Mammary epithelial cell (primary cell): ENCODE measurements at regions of chr9 and their contacts with region 1.

Region 1: GRCh38 chr9:114405294-114406034 is 17.7 kb upstream of the AKNA start:
- DNase-seq: peak; percentile 71
- H3K4me3 ChIP-seq: no peak overlapping the region
- H3K27ac ChIP-seq: no peak overlapping the region
- H3K4me1 ChIP-seq: peaks cover 27% of the 10 kb centered on the region
- H3K27me3 ChIP-seq: no peaks in the 10 kb centered on the region
- CTCF ChIP-seq: peak; percentile 86 to 87

Region 2: DNA sequence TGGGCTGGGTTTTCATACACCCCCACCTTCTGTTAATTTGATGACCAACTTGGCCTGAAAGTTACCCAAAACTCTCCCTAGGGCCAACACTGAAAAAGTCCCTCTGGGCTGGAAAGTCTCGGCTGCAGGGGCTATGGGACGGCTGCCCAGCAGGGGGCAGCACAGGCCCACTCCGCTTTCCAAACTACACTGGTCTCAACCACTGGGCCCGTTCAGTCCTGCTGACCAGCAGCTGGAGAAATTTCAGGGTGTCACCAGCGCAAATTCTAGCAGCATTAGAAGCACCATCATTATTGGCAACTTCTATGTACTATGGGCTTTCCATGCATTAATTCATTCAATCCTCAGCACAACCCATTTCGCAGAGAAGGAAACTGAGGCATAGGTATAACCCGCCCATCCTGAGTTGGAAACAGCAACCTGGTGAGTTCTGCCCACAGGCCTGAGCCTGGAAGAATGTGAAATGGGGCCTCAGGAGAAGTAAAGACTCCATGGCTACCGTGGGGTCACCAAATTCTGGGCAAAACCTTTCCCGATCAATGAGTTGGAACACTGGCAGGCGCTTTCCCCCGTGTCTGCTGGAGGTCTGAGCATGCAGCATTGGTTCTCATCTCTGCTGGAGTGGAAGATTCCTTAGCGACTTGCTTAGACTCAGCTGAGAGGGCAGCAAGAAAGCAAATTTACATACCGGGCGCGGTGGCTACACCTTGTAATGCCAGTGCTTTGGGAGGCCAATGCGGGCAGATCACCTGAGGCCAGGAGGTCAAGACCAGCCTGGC is 66.1 kb before region 1 on chr9:
- CTCF ChIA-PET with region 1: interaction called, 12 read pairs
- dilution Hi-C with region 1: no loop called
- in situ Hi-C with region 1: no loop called
- intact Hi-C with region 1: loop called (anchors 1 kb)
- DNase-seq: peak; percentile 37
- H3K4me3 ChIP-seq: no peak overlapping the region
- H3K27ac ChIP-seq: no peak overlapping the region
- H3K4me1 ChIP-seq: peaks cover 11% of the 10 kb centered on the region
- H3K27me3 ChIP-seq: no peaks in the 10 kb centered on the region
- CTCF ChIP-seq: peak; percentile 85 to 87

Region 3: GRCh38 chr9:114424126-114424525 is 18.7 kb after region 1 on chr9:
- CTCF ChIA-PET with region 1: no interaction called
- dilution Hi-C with region 1: no loop called
- in situ Hi-C with region 1: no loop called
- intact Hi-C with region 1: no loop called
- DNase-seq: no peak
- H3K4me3 ChIP-seq: no peak overlapping the region
- H3K27ac ChIP-seq: no peak overlapping the region
- H3K4me1 ChIP-seq: no peaks in the 10 kb centered on the region
- H3K27me3 ChIP-seq: no peaks in the 10 kb centered on the region
- CTCF ChIP-seq: no peak

Region 4: GRCh38 chr9:114434878-114435311 is 29.4 kb after region 1 on chr9:
- CTCF ChIA-PET with region 1: no interaction called
- dilution Hi-C with region 1: no loop called
- in situ Hi-C with region 1: no loop called
- intact Hi-C with region 1: loop called (anchors 2 kb)
- DNase-seq: peak; percentile 41
- H3K4me3 ChIP-seq: no peak overlapping the region
- H3K27ac ChIP-seq: no peak overlapping the region
- H3K4me1 ChIP-seq: no peaks in the 10 kb centered on the region
- H3K27me3 ChIP-seq: no peaks in the 10 kb centered on the region
- CTCF ChIP-seq: peak; percentile 80 to 84

Region 5: DNA sequence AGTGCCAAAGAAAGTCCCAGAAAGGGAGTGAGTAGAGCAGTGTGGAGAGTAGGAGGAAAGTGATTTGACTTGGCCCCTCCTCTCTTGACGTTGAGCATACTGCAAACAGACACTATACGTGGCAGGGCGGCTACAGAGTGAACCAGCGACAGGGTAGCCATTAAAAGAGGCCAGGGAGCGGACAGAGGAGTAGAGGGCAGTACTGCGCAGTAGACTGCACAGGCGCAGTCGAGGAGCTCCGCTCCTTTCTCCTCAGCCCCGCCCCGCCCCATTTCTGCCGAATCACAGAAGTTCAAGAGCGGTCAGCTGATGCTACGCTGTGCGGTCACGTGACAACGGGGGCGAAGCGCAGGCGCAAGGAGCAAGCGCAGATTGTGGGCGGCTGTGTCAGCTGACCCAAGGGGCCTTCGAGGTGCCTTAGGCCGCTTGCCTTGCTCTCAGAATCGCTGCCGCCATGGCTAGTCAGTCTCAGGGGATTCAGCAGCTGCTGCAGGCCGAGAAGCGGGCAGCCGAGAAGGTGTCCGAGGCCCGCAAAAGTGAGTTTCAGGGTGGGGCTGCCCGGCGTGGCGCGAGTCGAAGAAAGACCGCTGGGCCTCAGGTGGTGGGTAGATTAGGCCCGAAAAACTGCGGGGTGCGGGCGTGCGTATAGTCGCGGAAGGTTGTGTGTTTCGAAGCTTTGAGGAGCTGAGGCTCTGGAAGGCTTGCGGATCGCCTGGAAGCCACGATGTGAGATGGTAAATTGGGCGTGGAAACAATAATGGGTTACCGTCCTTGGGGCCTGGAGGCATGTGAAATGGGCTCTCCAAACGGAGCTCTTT is 182.1 kb after region 1 on chr9 and contains the start of gene ATP6V1G1:
- CTCF ChIA-PET with region 1: no interaction called
- dilution Hi-C with region 1: no loop called
- in situ Hi-C with region 1: no loop called
- intact Hi-C with region 1: loop called (anchors 2 kb)
- DNase-seq: peak; percentile 99
- H3K4me3 ChIP-seq: peak within 1 kb of the TSS; percentile 72 to 94 (median 89)
- H3K27ac ChIP-seq: peak within 1 kb of the TSS; percentile 96
- H3K4me1 ChIP-seq: peaks cover 25% of the 10 kb centered on the region
- H3K27me3 ChIP-seq: no peaks in the 10 kb centered on the region
- CTCF ChIP-seq: peak in 1 of 2 donors; percentile 24
- total RNA-seq, gene ATP6V1G1: 99.6 to 130 TPM

Region 6: GRCh38 chr9:114662081-114662989 is 256.9 kb after region 1 on chr9:
- CTCF ChIA-PET with region 1: interaction called, 15 read pairs
- dilution Hi-C with region 1: no loop called
- in situ Hi-C with region 1: loop called in 1 of 2 experiments (anchors 10 kb)
- intact Hi-C with region 1: loop called (anchors 1 kb)
- DNase-seq: peak; percentile 29
- H3K4me3 ChIP-seq: no peak overlapping the region
- H3K27ac ChIP-seq: no peak overlapping the region
- H3K4me1 ChIP-seq: peaks cover 13% of the 10 kb centered on the region
- H3K27me3 ChIP-seq: no peaks in the 10 kb centered on the region
- CTCF ChIP-seq: peak; percentile 79 to 91

Region 7: DNA sequence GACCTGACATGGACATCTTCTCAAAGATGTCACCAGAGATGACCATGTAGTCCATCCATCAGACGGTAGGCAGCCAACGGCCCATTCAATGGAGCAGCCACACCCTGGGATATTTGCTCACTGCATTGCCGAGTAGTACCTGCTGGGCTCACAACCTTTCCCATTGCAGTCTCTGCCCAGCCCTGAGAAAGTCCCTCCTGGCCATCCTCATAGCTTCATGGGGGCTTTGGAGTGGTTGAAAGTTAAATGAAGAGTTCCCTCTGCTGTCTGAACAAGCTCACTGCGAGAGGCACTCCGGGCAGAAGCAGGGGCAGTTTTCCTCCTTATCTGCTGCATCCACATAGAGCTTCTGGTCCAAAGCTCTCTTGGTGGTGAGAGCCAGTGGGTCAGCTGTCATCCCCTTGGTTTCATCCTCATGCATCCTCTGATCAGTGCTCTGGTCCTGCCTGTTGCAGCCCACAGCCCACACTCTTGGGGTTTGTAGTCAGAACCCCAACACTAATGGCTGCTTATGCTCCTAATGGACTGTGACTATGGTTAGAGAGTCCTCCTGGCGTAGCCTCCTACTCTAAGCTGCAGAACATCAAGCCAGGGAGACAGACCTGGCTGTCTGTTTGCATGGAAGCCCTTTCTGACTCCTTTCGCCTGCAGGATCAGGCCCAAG is 501.6 kb after region 1 on chr9:
- CTCF ChIA-PET with region 1: no interaction called
- dilution Hi-C with region 1: no loop called
- in situ Hi-C with region 1: no loop called
- intact Hi-C with region 1: loop called (anchors 2 kb)
- DNase-seq: peak; percentile 48
- H3K4me3 ChIP-seq: no peak overlapping the region
- H3K27ac ChIP-seq: no peak overlapping the region
- H3K4me1 ChIP-seq: peaks cover 31% of the 10 kb centered on the region
- H3K27me3 ChIP-seq: no peaks in the 10 kb centered on the region
- CTCF ChIP-seq: peak; percentile 61 to 62